ENCODE measurements at regions of chr6 and their contacts with region 1.

Region 1: GRCh38 chr6:26322645-26323482 is 42.1 kb upstream of the BTN3A2 start:
- DNase-seq: peak; percentile 48
- H3K4me3 ChIP-seq: peak overlapping the region; percentile 68 to 72
- H3K27ac ChIP-seq: peak overlapping the region; percentile 36 to 61; a peak in 3 of 4 replicates
- H3K4me1 ChIP-seq: peaks cover 0 to 3% of the 10 kb centered on the region in 2 experiments; a peak in 1 of 4 replicates
- H3K27me3 ChIP-seq: no peaks in the 10 kb centered on the region
- CTCF ChIP-seq: no peak
- EP300 ChIP-seq: no peak; a peak in 1 of 4 replicates
- RAD21 ChIP-seq: no peak

Region 2: GRCh38 chr6:26309731-26310142 is 13.1 kb before region 1 on chr6:
- CTCF ChIA-PET with region 1: interaction called, 19 read pairs
- POLR2A ChIA-PET with region 1: no interaction called
- DNase-seq: no peak
- H3K4me3 ChIP-seq: no peak overlapping the region; a peak in 1 of 4 replicates
- H3K27ac ChIP-seq: peak overlapping the region in 1 of 2 experiments; percentile 74; a peak in 2 of 4 replicates
- H3K4me1 ChIP-seq: peaks cover 0 to 6% of the 10 kb centered on the region in 2 experiments; a peak in 3 of 4 replicates
- H3K27me3 ChIP-seq: no peaks in the 10 kb centered on the region
- CTCF ChIP-seq: no peak
- EP300 ChIP-seq: peak in 1 of 2 experiments; percentile 82; a peak in 1 of 4 replicates
- RAD21 ChIP-seq: no peak